Ovary (tissue), 10 donors: ENCODE measurements at regions of chr1 and their contacts with region 1.

Region 1: GRCh38 chr1:44002606-44003157 is 11.3 kb downstream of the CCDC24 start:
- DNase-seq: no peak
- H3K4me3 ChIP-seq: no peak overlapping the region
- H3K27ac ChIP-seq: no peak overlapping the region
- H3K4me1 ChIP-seq: no peaks in the 10 kb centered on the region
- H3K27me3 ChIP-seq: no peaks in the 10 kb centered on the region
- CTCF ChIP-seq: no peak
- EP300 ChIP-seq: no peak
- POLR2A ChIP-seq: no peak

Region 2: DNA sequence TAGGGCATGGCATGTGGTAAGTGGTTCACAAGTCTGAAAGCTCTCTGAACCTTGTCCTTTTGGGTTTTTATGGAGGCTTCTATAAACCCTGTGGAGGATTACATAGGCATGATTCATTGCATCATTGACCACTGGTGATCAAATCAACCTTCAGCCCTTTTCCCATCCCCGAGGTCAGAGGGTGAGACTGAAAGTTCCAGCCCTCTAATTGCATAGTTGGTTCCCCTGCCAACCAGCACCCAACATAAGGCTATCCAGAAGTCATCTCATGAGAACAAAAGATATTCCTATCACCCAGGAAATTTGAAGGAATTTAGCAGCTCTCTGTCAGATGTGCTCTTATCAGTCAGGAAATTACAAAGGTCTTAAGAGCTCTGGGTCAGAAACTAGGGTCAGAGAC is 158.6 kb before region 1 on chr1:
- intact Hi-C with region 1: no loop called
- DNase-seq: no peak
- H3K4me3 ChIP-seq: no peak overlapping the region
- H3K27ac ChIP-seq: no peak overlapping the region
- H3K4me1 ChIP-seq: no peaks in the 10 kb centered on the region
- H3K27me3 ChIP-seq: no peaks in the 10 kb centered on the region
- CTCF ChIP-seq: no peak
- EP300 ChIP-seq: no peak
- POLR2A ChIP-seq: no peak

Region 3: DNA sequence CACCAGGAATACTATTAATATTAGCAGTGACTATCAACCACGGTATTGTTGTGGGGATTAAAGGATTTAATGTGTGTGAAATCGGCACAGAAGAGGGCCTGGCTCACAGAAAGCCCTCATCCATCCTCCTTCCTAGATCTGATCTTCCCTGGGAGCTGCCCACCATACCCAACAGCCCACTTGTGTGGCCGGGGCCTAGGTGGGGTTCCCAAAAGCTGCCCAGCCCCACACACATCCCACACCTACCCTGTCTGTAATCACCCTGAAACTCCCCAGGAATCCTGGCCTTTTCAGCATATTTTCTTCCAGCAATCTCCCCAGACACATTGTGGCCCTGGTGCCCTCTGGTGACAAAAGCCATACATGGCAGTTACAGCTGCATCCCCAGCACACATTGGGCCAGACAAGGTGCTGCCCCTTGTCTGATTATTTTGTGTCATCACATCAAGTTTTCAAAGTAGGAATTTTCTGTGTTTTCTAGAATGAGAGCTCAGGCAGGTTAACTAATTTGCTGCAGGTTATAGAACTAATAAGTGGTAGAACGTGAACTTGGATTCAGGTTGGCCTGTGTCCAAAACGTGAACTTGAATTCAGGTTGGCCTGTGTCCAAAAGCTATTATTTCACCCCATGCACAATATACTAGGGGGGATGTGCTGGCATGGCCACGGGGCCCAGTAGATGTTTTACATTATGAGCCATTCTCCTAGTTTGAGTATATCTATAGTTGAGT is 33.9 kb after region 1 on chr1:
- intact Hi-C with region 1: loop called in 1 of 4 experiments (anchors 5 kb)
- DNase-seq: peak in 2 of 5 donors; percentile 46 to 49
- H3K4me3 ChIP-seq: no peak overlapping the region
- H3K27ac ChIP-seq: no peak overlapping the region
- H3K4me1 ChIP-seq: peaks cover 11% of the 10 kb centered on the region
- H3K27me3 ChIP-seq: no peaks in the 10 kb centered on the region
- CTCF ChIP-seq: no peak
- EP300 ChIP-seq: no peak
- POLR2A ChIP-seq: no peak

Region 4: DNA sequence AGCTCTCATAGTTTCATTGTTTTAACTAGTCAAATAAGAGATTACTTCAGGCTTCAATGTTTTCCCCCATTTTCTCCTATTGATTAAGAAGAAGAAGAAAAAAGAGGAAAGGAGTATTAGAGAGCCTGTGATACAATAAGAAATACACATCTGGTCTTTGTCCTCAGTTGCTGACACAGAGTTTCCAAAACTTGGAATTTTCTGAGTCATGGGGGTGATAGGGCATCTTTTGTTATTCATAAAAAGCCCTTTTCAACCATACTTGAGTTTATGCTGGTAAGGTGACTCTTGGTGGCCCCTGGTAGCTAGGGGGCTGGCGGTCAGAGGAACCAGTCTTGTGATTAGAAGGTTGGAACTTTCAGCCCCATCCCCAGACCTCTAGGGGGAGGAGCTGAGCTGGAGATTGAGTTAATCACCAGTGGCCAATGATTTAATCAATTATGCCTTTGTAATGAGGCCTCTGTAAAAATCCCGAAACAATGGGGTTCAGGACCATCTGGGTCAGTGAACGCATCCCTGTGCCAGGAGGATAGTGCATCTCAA is 167.7 kb after region 1 on chr1:
- intact Hi-C with region 1: no loop called
- DNase-seq: no peak
- H3K4me3 ChIP-seq: no peak overlapping the region
- H3K27ac ChIP-seq: no peak overlapping the region
- H3K4me1 ChIP-seq: no peaks in the 10 kb centered on the region
- H3K27me3 ChIP-seq: no peaks in the 10 kb centered on the region
- CTCF ChIP-seq: no peak
- EP300 ChIP-seq: no peak
- POLR2A ChIP-seq: no peak

Region 5: DNA sequence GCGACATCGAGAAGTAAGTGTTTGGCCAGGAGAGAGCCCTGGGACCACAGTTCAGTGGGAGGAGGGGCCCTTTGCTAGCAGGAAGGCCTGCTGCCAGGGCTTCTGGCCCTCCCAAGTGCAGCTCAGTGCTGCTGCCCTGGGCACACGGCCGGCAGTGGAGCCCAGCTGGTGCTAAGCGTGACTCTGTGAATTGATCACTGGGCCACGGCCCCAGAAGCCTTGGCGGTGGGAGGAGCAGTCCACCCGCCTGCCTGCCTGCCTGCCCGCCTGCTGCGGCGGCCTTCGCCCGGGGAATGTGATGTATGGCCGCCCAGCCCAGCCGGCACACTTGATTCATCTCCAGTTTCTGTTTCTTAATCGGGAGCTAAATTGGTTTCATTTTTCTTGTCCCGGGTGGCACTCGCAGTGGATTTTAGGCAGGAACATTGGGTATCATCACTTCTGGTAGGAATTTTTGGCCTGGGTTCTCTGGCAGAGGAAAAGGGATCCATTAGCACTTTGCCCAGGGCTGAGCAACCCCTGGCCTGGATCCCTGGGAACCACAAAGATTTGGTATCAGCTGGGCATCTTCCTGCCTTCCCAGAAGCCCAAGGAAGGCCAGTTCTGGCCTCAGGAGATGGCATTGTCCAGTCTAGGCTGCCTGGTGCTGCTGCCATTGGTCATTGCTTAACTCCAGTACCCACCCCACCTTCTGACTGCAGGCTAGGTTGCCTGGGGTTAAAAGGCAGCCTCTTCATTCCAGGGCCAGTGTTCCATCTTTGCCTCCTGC is 643.0 kb after region 1 on chr1:
- intact Hi-C with region 1: loop called in 1 of 4 experiments (anchors 10 kb)
- DNase-seq: peak; percentile 32 to 63 (median 60)
- H3K4me3 ChIP-seq: no peak overlapping the region
- H3K27ac ChIP-seq: peak overlapping the region in 1 of 2 donors; percentile 37
- H3K4me1 ChIP-seq: peaks cover 6% of the 10 kb centered on the region
- H3K27me3 ChIP-seq: no peaks in the 10 kb centered on the region
- CTCF ChIP-seq: no peak
- EP300 ChIP-seq: no peak
- POLR2A ChIP-seq: no peak